CD4-positive, alpha-beta memory T cell (primary cell): ENCODE measurements at regions of chr12 and their contacts with region 1.

Region 1: GRCh38 chr12:112900299-112901145 is 6.2 kb upstream of the OAS1 start:
- DNase-seq: peak; percentile 39 to 59 (median 45)
- H3K4me3 ChIP-seq: no peak overlapping the region
- H3K4me3 Mint-ChIP-seq: peak overlapping the region in 1 of 8 donors; percentile 2
- H3K27ac ChIP-seq: no peak overlapping the region
- H3K27ac Mint-ChIP-seq: peak overlapping the region in 6 of 7 donors; percentile 13 to 70 (median 58)
- H3K4me1 ChIP-seq: peaks cover 23% of the 10 kb centered on the region
- H3K4me1 Mint-ChIP-seq: peaks cover 18 to 39% (median 24%) of the 10 kb centered on the region in 4 donors
- H3K27me3 ChIP-seq: no peaks in the 10 kb centered on the region
- H3K27me3 Mint-ChIP-seq: peaks cover 0 to 7% of the 10 kb centered on the region in 2 donors

Region 2: DNA sequence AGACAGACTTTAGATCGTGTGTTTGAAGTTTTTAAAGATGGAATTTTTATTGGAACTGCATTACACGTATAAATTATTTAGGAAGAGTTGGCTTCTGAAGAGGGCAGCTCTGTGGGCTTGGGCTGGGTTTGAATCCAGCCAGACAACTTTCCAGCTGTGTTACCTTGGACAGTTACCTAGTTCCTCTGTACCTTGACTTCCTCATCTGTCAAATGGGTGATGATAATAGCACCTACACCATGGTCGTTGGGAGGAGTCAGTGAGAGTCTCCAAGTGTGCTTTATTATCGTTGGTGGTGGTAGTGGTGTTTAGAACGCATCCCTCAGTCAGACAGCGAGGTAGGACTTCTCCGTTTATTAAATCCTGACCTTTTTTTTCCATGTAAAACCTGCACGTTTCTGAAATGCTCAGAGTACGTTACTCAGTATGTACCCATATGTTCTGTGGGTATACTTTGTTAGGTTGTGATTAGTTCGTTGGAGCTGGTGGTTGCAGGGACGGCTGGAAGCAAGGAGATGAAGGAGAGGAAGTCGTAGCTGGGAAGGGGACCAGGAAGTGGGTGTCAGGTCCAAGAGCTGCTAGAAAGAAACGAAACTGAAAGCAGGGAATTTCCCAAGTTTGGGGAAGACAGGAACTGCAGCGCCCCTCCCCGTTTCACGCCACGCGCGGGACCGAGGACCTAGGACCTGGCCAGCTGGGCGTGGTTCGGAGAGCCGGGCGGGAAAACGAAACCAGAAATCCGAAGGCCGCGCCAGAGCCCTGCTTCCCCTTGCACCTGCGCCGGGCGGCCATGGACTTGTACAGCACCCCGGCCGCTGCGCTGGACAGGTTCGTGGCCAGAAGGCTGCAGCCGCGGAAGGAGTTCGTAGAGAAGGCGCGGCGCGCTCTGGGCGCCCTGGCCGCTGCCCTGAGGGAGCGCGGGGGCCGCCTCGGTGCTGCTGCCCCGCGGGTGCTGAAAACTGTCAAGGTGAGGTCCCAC is 37.5 kb after region 1 on chr12 and contains the start of gene OAS3:
- CTCF ChIA-PET with region 1: interaction called, 15 read pairs
- POLR2A ChIA-PET with region 1: interaction called, 10 read pairs
- intact Hi-C with region 1: no loop called
- DNase-seq: peak; percentile 66 to 87 (median 70)
- H3K4me3 ChIP-seq: peak within 1 kb of the TSS; percentile 72 to 84
- H3K4me3 Mint-ChIP-seq: peak within 1 kb of the TSS; percentile 87 to 100 (median 94)
- H3K27ac ChIP-seq: peak within 1 kb of the TSS; percentile 72
- H3K27ac Mint-ChIP-seq: peak within 1 kb of the TSS; percentile 85 to 98 (median 96)
- H3K4me1 ChIP-seq: peaks cover 35% of the 10 kb centered on the region
- H3K4me1 Mint-ChIP-seq: peaks cover 28 to 45% (median 36%) of the 10 kb centered on the region in 4 donors
- H3K27me3 ChIP-seq: no peaks in the 10 kb centered on the region
- H3K27me3 Mint-ChIP-seq: no peaks in the 10 kb centered on the region
- total RNA-seq, gene OAS3: 20.3 to 22.5 TPM

Region 3: DNA sequence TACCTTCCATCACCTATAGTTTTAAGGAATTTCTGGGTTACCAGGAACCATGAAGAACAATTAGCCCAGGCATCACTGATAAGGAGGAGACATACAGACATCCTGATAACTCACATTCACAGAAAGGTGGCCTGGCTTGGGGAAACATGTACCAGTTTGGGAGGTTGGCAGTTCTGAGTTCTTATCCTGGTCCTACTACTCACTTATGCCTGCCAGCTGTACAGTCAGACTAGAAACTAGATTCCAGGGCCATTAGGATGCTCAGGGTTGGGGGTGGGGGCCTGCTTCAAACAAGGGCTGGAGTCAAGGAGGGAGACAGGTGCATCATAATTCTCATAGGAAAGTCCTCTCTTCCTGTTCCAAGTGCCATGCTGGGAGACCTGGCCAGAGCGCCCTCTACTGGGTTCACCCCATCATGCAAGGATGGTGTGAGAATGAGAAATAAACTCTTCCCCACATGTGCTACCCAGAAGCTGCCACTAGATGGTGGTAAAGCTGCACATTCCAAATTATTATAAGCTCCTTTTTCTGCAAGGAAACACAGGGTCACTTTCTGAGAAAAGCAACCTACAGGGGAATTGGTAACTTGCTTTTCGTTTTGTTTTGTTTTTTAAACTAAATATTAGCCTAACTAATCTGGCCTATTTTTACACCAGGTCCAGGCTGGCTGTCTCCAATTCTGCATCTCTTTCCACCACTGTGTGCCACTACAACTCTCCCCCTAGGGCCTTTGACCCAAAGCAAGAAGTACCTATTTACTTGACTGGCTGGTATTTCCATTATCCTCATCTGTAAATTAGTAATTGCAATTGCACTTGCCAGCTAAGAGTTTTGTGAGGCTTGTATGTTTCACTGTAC is 92.2 kb after region 1 on chr12:
- CTCF ChIA-PET with region 1: interaction called, 19 read pairs
- POLR2A ChIA-PET with region 1: interaction called, 9 read pairs
- intact Hi-C with region 1: loop called (anchors 1 kb)
- DNase-seq: peak; percentile 37 to 62 (median 50)
- H3K4me3 ChIP-seq: no peak overlapping the region
- H3K4me3 Mint-ChIP-seq: no peak overlapping the region
- H3K27ac ChIP-seq: no peak overlapping the region
- H3K27ac Mint-ChIP-seq: peak overlapping the region; percentile 24 to 88 (median 67)
- H3K4me1 ChIP-seq: peaks cover 9% of the 10 kb centered on the region
- H3K4me1 Mint-ChIP-seq: peaks cover 22 to 26% (median 24%) of the 10 kb centered on the region in 4 donors
- H3K27me3 ChIP-seq: no peaks in the 10 kb centered on the region
- H3K27me3 Mint-ChIP-seq: no peaks in the 10 kb centered on the region

Region 4: DNA sequence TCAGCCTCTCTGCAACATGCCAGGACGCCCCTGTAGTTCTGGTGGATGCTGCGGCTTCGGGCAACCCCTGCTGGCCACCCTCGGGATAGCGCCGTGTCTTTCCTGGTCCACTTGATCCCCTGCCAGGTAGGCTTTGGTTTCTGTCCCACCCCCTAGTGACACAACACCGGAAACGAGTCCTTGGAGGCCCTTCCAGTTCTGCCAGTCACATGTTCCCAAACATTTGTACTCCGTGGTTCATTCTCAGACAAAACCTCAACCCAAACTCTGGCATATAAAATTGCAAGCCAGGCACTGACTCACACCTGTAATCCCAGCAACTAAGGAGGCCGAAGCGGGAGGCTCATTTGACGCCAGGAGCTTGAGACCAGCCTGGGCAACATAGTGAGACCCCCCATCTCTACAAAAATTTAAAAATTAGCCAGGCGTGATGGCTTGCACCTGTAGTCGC is 197.9 kb after region 1 on chr12:
- CTCF ChIA-PET with region 1: interaction called, 15 read pairs
- POLR2A ChIA-PET with region 1: no interaction called
- intact Hi-C with region 1: no loop called
- DNase-seq: peak; percentile 52 to 68 (median 60)
- H3K4me3 ChIP-seq: no peak overlapping the region
- H3K4me3 Mint-ChIP-seq: peak overlapping the region in 1 of 8 donors; percentile 4
- H3K27ac ChIP-seq: no peak overlapping the region
- H3K27ac Mint-ChIP-seq: peak overlapping the region in 4 of 7 donors; percentile 64 to 85 (median 75)
- H3K4me1 ChIP-seq: peaks cover 13% of the 10 kb centered on the region
- H3K4me1 Mint-ChIP-seq: peaks cover 14 to 41% (median 20%) of the 10 kb centered on the region in 4 donors
- H3K27me3 ChIP-seq: no peaks in the 10 kb centered on the region
- H3K27me3 Mint-ChIP-seq: peaks cover 0 to 1% of the 10 kb centered on the region in 2 donors